Thyroid gland (tissue), 4 donors: ENCODE measurements at regions of chr6 and their contacts with region 1.

Region 1: GRCh38 chr6:99241905-99242534 is 107.5 kb downstream of the FAXC start:
- DNase-seq: peak; percentile 50 to 55
- H3K4me3 ChIP-seq: no peak overlapping the region
- H3K27ac ChIP-seq: no peak overlapping the region
- H3K4me1 ChIP-seq: no peaks in the 10 kb centered on the region
- H3K27me3 ChIP-seq: no peaks in the 10 kb centered on the region
- CTCF ChIP-seq: peak; percentile 9 to 68 (median 54)
- POLR2A ChIP-seq: no peak

Region 2: GRCh38 chr6:99151634-99152344 is 90.2 kb before region 1 on chr6:
- intact Hi-C with region 1: loop called (anchors 5 kb)
- DNase-seq: peak; percentile 61 to 76
- H3K4me3 ChIP-seq: no peak overlapping the region
- H3K27ac ChIP-seq: no peak overlapping the region
- H3K4me1 ChIP-seq: no peaks in the 10 kb centered on the region
- H3K27me3 ChIP-seq: no peaks in the 10 kb centered on the region
- CTCF ChIP-seq: peak in 5 of 6 experiments; percentile 41 to 77 (median 62)
- POLR2A ChIP-seq: no peak

Region 3: DNA sequence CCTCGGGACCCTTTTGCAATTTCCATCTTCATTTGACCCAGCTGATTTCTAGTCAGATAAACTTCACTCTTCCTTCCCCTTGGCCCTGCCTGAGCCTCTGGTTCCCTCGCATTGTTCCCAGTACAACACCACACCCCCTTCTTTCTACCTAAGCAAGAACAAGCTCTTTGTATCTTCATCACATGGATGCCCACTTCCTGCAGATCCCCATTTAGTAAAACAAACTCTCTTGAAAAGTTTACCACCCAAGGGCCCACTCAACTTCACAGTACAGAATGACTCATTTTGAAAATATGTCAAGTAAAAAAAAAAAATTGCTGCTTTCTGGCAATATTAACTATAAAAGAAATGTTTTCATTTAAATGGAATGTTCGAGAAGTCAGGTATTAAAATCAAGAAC is 102.3 kb after region 1 on chr6:
- intact Hi-C with region 1: no loop called
- DNase-seq: peak in 1 of 2 donors; percentile 2
- H3K4me3 ChIP-seq: no peak overlapping the region
- H3K27ac ChIP-seq: no peak overlapping the region
- H3K4me1 ChIP-seq: peaks cover 3 to 4% of the 10 kb centered on the region in 2 donors
- H3K27me3 ChIP-seq: no peaks in the 10 kb centered on the region
- CTCF ChIP-seq: no peak
- POLR2A ChIP-seq: no peak

Region 4: GRCh38 chr6:99393698-99394531 is 151.9 kb after region 1 on chr6 and contains the start of gene COQ3:
- intact Hi-C with region 1: no loop called
- DNase-seq: peak; percentile 66 to 69
- H3K4me3 ChIP-seq: peak within 1 kb of the TSS; percentile 31 to 70 (median 58)
- H3K27ac ChIP-seq: peak within 1 kb of the TSS; percentile 32 to 85 (median 81)
- H3K4me1 ChIP-seq: no peaks in the 10 kb centered on the region
- H3K27me3 ChIP-seq: no peaks in the 10 kb centered on the region
- CTCF ChIP-seq: no peak
- POLR2A ChIP-seq: no peak
- total RNA-seq, gene COQ3: 5.2 to 7.0 (median 5.8) TPM